Activated CD4-positive, alpha-beta memory T cell treated with anti-CD3 and anti-CD28 coated beads, Interleukin-2, amount 10 ng/mL, durations not matched to agents 7 days and 5 days (primary cell): ENCODE measurements at regions of chr11 and their contacts with region 1.

Region 1: GRCh38 chr11:61967116-61967923 is at the start of gene FTH1:
- DNase-seq: peak; percentile 90
- H3K4me3 Mint-ChIP-seq: peak within 1 kb of the TSS; percentile 92
- H3K27ac Mint-ChIP-seq: peak within 1 kb of the TSS; percentile 94
- H3K4me1 Mint-ChIP-seq: peaks cover 67% of the 10 kb centered on the region
- H3K27me3 Mint-ChIP-seq: no peaks in the 10 kb centered on the region
- total RNA-seq, gene FTH1: 1,164 to 1,189 TPM

Region 2: GRCh38 chr11:61816736-61817455 is 150.4 kb before region 1 on chr11 and contains the start of gene FADS1:
- CTCF ChIA-PET with region 1: no interaction called
- POLR2A ChIA-PET with region 1: interaction called, 14 read pairs
- DNase-seq: peak; percentile 88
- H3K4me3 Mint-ChIP-seq: peak within 1 kb of the TSS; percentile 97
- H3K27ac Mint-ChIP-seq: peak within 1 kb of the TSS; percentile 83
- H3K4me1 Mint-ChIP-seq: peaks cover 11% of the 10 kb centered on the region
- H3K27me3 Mint-ChIP-seq: peaks cover 11% of the 10 kb centered on the region
- total RNA-seq, gene FADS1: 63.6 to 68.2 TPM

Region 3: DNA sequence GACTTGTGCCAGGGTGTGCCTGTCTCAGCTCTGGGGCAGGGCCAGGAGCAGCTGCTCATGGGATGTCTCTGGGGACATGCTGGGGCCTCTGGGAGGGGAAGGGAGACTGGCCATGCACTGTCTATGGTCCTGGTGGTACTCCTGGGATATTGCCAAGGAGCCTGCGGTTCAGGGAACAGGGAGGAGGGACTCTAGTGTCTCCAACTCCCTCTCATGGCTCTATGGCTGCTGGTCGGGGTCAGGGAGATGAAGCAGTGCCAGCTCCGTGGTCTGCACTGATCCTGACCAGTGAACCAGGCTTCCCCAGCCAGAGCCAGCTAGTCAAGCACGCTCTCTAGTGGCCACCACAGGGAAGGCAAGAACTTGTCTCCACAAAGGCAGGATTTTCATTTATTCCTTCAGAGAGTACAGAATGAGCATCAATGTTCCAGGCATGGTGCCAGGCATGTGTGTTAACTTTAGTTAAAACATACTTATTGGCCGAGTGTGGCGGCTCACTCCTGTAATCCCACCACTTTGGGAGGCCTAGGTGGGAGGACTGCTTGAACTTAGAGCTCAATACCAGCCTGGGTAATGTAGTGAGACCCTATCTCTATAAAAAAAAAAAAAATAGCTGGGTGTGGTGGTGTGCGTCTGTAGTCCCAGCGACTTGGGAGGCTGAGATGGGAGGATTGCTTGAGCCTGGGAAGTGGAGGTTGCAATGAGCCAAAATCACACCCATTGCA is 19.7 kb before region 1 on chr11:
- CTCF ChIA-PET with region 1: interaction called, 9 read pairs
- POLR2A ChIA-PET with region 1: interaction called, 16 read pairs
- DNase-seq: peak; percentile 73
- H3K4me3 Mint-ChIP-seq: no peak overlapping the region
- H3K27ac Mint-ChIP-seq: no peak overlapping the region
- H3K4me1 Mint-ChIP-seq: peaks cover 2% of the 10 kb centered on the region
- H3K27me3 Mint-ChIP-seq: peaks cover 5% of the 10 kb centered on the region

Region 4: GRCh38 chr11:61978703-61979661 is 11.7 kb after region 1 on chr11:
- CTCF ChIA-PET with region 1: interaction called, 3 read pairs
- POLR2A ChIA-PET with region 1: interaction called, 38 read pairs
- DNase-seq: no peak
- H3K4me3 Mint-ChIP-seq: no peak overlapping the region
- H3K27ac Mint-ChIP-seq: no peak overlapping the region
- H3K4me1 Mint-ChIP-seq: peaks cover 14% of the 10 kb centered on the region
- H3K27me3 Mint-ChIP-seq: no peaks in the 10 kb centered on the region

Region 5: GRCh38 chr11:62025487-62026105 is 58.3 kb after region 1 on chr11:
- CTCF ChIA-PET with region 1: interaction called, 3 read pairs
- POLR2A ChIA-PET with region 1: interaction called, 79 read pairs
- DNase-seq: peak; percentile 89
- H3K4me3 Mint-ChIP-seq: peak overlapping the region; percentile 45
- H3K27ac Mint-ChIP-seq: peak overlapping the region; percentile 99
- H3K4me1 Mint-ChIP-seq: peaks cover 24% of the 10 kb centered on the region
- H3K27me3 Mint-ChIP-seq: no peaks in the 10 kb centered on the region

Region 6: DNA sequence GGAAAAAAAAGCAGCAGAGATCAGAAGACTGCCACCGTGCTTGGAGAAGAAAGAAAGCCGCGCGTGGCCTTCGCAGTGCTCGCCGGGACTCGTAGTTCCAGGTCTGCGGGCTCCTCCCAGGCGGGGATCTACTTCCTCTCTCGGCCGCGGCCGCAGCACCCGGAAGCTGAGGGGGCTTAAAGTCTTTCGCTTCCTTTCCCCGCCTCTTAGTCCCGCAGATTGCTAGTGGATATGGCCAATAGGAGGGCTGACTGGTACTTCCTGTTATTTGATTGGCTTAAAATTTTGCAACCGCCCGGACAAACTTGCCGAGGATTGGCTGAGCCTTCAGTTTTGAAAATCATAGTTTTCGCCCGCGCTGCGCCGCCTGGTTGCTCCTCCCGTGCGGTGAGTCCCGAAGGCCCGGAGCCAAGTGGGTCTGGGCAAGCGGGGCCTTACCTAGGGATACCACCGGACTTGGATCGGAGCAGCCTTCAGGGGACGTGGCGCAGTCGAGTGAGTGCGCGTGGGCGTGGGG is 156.4 kb after region 1 on chr11 and contains the start of gene INCENP:
- CTCF ChIA-PET with region 1: no interaction called
- POLR2A ChIA-PET with region 1: interaction called, 10 read pairs
- DNase-seq: peak; percentile 96
- H3K4me3 Mint-ChIP-seq: peak within 1 kb of the TSS; percentile 93
- H3K27ac Mint-ChIP-seq: peak within 1 kb of the TSS; percentile 87
- H3K4me1 Mint-ChIP-seq: peaks cover 43% of the 10 kb centered on the region
- H3K27me3 Mint-ChIP-seq: peaks cover 4% of the 10 kb centered on the region
- total RNA-seq, gene INCENP: 156 to 169 TPM

Region 7: GRCh38 chr11:62137276-62137861 is 170.0 kb after region 1 on chr11:
- CTCF ChIA-PET with region 1: no interaction called
- POLR2A ChIA-PET with region 1: no interaction called
- DNase-seq: no peak
- H3K4me3 Mint-ChIP-seq: no peak overlapping the region
- H3K27ac Mint-ChIP-seq: no peak overlapping the region
- H3K4me1 Mint-ChIP-seq: peaks cover 22% of the 10 kb centered on the region
- H3K27me3 Mint-ChIP-seq: no peaks in the 10 kb centered on the region